Transverse colon (tissue), 4 donors: ENCODE measurements at regions of chr10 and their contacts with region 1.

Region 1: GRCh38 chr10:15059914-15060313 is 16.2 kb downstream of the OLAH start:
- DNase-seq: no peak
- H3K4me3 ChIP-seq: no peak overlapping the region
- H3K27ac ChIP-seq: no peak overlapping the region
- H3K4me1 ChIP-seq: no peaks in the 10 kb centered on the region
- H3K27me3 ChIP-seq: no peaks in the 10 kb centered on the region
- CTCF ChIP-seq: no peak
- EP300 ChIP-seq: no peak
- POLR2A ChIP-seq: no peak

Region 2: DNA sequence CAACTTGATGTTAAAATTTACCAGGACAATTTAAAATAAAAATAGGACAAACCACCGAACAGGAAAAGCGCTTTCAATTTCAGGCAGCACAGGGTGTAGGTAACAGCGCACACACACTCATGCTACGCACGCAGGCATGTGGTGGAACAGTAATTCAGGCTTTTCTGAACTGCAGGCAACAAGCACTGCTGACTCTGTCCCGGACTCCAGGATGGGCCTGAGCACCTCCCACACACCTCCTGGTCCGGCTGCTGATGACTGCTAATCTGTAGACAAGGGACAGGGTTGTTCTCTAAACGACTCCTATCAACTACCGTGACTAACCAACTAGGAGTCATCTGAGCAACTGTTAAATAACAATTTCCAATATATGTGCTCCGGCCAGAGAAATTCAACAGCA is 536.6 kb before region 1 on chr10:
- in situ Hi-C with region 1: no loop called
- intact Hi-C with region 1: no loop called
- DNase-seq: peak; percentile 42
- H3K4me3 ChIP-seq: no peak overlapping the region
- H3K27ac ChIP-seq: peak overlapping the region; percentile 10 to 32 (median 28)
- H3K4me1 ChIP-seq: peaks cover 0 to 56% (median 16%) of the 10 kb centered on the region in 4 donors
- H3K27me3 ChIP-seq: no peaks in the 10 kb centered on the region
- CTCF ChIP-seq: no peak
- EP300 ChIP-seq: no peak
- POLR2A ChIP-seq: no peak

Region 3: DNA sequence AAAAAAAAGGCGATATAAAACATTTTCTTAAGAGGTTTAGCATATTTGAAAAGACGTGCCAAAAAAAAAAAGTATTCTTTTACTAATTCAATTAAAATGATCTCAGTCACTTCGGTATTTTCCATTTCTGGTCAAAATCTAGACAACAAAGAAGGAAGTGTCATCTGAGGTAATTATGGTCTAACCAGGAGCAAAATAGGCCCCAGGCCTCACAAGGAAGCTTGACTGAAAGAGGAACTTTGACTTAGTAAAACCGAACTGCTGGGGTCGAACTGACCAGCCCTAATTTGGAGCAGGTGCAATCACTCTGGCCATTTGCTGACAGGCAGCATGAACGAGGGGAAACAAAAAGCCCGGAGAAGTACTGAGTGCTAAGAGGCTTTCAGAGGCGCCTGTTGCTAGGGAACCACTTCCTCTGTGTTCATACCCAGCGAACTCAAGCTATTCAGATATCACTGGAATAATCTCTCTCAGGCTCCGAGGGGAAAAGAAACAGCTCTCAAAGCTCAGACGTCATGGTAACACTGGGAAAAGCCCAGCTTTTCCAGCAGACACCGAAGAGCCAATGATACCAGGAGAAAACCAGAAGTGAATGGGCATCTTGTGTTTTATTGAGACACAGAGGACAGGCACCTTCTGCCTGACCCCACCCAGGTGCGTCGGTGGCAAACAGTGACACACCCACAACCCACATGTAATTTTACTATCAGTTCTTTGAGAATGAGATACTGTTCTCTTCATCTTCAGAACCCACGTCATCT is 411.7 kb before region 1 on chr10:
- in situ Hi-C with region 1: no loop called
- intact Hi-C with region 1: no loop called
- DNase-seq: peak; percentile 73
- H3K4me3 ChIP-seq: peak overlapping the region in 1 of 4 donors; percentile 19
- H3K27ac ChIP-seq: peak overlapping the region; percentile 73 to 87 (median 81)
- H3K4me1 ChIP-seq: peaks cover 14 to 22% (median 18%) of the 10 kb centered on the region in 4 donors
- H3K27me3 ChIP-seq: no peaks in the 10 kb centered on the region
- CTCF ChIP-seq: no peak
- EP300 ChIP-seq: no peak
- POLR2A ChIP-seq: no peak

Region 4: GRCh38 chr10:14798636-14799035 is 261.3 kb before region 1 on chr10:
- in situ Hi-C with region 1: no loop called
- intact Hi-C with region 1: loop called (anchors 5 kb)
- DNase-seq: no peak
- H3K4me3 ChIP-seq: no peak overlapping the region
- H3K27ac ChIP-seq: no peak overlapping the region
- H3K4me1 ChIP-seq: no peaks in the 10 kb centered on the region
- H3K27me3 ChIP-seq: no peaks in the 10 kb centered on the region
- CTCF ChIP-seq: no peak
- EP300 ChIP-seq: no peak
- POLR2A ChIP-seq: no peak